ENCODE measurements at regions of chr2 and their contacts with region 1.

Region 1: DNA sequence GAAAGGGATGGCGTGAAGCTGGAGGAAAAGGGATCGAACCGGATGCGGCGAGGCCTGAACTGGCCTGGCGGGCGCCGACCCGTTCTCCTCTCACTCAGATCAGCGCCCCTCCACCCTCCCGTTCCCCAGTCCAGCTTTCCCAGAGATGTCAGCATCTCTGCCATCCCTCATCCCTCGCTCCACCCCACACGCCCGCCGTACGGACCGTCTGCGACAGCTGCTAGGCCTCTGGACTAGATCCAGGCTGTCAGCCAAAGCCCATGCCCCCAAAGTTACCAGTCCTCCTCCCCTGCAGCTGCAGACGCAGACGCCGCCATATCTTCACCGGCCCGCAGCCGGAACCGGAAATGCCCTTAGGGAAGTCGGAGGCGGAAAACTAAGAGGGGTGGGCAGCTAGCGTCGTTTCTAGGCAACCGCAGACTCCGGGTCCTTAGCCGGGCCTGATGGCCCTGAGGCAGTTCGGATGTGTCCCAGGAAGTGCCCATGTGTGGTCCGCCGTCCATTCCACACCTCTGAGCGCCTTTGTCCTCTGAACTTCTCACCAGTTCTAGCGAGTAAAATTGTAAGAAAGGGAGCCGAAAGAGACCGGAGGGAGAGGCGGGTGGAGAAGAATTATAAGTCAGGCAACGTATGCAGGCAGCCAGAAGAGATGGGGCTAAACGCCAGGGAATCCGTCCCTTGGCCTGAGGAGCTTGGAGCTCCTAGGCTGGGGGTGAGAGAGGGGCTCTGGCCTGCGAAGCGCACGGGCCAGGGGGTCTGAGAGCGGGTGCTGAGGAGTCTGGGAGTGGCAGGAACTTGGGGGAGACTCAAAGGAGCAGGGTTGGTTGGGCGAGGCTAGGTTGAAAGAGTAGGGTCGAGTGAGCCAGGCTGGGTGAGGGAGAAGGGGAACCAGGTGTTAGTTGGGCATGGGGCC is at the starts of genes RNF25 and STK36:
- DNase-seq: peak; percentile 91
- H3K4me3 ChIP-seq: peak within 1 kb of the TSS; percentile 94 to 97
- H3K27ac ChIP-seq: peak within 1 kb of the TSS; percentile 76 to 94
- H3K4me1 ChIP-seq: peaks cover 8 to 11% of the 10 kb centered on the region in 2 experiments; a peak in 3 of 4 replicates
- H3K27me3 ChIP-seq: no peaks in the 10 kb centered on the region
- CTCF ChIP-seq: no peak
- EP300 ChIP-seq: no peak; a peak in 1 of 4 replicates
- RAD21 ChIP-seq: no peak
- polyA plus RNA-seq, gene RNF25: 72.2 and 90.6 TPM in 2 replicates
- polyA plus RNA-seq, gene STK36: 53.5 and 83.2 TPM in 2 replicates

Region 2: GRCh38 chr2:218691234-218691633 is 19.3 kb after region 1 on chr2:
- CTCF ChIA-PET with region 1: interaction called, 23 read pairs
- POLR2A ChIA-PET with region 1: interaction called, 4 read pairs
- DNase-seq: no peak
- H3K4me3 ChIP-seq: no peak overlapping the region
- H3K27ac ChIP-seq: peak overlapping the region in 1 of 2 experiments; percentile 44; a peak in 1 of 4 replicates
- H3K4me1 ChIP-seq: no peaks in the 10 kb centered on the region; a peak in 1 of 4 replicates
- H3K27me3 ChIP-seq: no peaks in the 10 kb centered on the region
- CTCF ChIP-seq: no peak
- EP300 ChIP-seq: no peak
- RAD21 ChIP-seq: no peak